ENCODE measurements at regions of chr14 and their contacts with region 1.

Region 1: DNA sequence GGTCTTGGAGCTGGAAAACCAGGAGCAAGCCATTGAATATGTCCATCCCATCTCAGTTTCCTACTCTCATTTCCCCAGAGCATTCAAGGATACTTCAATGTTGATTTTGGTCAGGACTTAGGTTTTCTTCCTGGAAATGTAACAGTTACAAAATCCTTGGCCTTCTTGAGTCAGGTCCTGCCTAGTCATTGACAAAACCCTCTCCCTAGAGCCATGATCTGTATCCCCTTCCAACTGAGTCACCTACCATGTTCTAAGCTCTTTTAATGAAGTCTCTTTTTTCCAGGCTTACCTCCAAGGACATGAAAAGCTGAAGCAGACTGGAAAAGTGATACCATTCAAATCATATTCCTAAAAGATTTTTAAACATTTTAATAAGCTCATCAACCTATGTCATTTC is 549.2 kb downstream of the GALC start:
- DNase-seq: no peak
- H3K4me3 Mint-ChIP-seq: no peak overlapping the region
- H3K27ac Mint-ChIP-seq: no peak overlapping the region
- H3K4me1 Mint-ChIP-seq: peaks cover 13% of the 10 kb centered on the region
- H3K27me3 Mint-ChIP-seq: no peaks in the 10 kb centered on the region
- CTCF ChIP-seq: no peak

Region 2: DNA sequence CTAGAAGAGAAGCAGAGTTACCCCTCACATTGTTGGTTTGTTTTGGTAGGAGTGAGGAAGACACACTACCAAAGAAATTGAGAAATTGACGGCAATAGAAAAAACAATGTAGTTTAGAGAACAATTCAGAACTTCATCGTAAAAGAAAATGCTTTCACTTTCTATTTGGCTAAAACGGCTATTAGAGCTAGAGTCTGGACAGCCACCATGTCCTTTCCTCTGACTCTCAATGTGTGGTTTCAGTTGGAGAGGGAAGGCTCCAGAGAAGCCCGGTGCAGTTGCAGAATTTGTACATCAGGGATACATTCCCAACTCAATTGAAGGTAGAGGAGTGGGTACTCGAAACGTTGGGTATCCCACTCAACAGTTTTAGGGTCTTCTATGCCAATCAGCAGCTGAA is 13.9 kb after region 1 on chr14:
- CTCF ChIA-PET with region 1: no interaction called
- intact Hi-C with region 1: loop called (anchors 2 kb)
- DNase-seq: no peak
- H3K4me3 Mint-ChIP-seq: peak overlapping the region; percentile 58
- H3K27ac Mint-ChIP-seq: no peak overlapping the region
- H3K4me1 Mint-ChIP-seq: no peaks in the 10 kb centered on the region
- H3K27me3 Mint-ChIP-seq: no peaks in the 10 kb centered on the region
- CTCF ChIP-seq: no peak

Region 3: DNA sequence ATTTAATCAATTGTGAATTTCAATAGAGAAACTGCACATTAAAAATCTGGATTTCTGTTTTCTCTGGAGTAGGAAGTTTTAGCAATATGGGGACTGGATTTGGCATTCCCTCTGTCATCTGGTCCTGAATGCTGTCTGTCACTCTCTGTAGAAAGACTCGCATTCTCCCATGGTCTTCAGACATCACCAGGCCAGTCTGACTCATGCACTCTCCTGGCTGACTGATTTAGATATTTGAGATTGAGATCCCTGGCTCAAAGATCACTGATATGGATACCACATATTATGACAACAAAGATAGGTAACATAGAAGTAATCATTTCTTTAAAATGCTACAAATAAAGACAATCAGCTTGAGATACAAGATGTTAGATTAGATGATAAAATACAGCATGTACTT is 24.7 kb after region 1 on chr14:
- CTCF ChIA-PET with region 1: no interaction called
- intact Hi-C with region 1: no loop called
- DNase-seq: no peak
- H3K4me3 Mint-ChIP-seq: no peak overlapping the region
- H3K27ac Mint-ChIP-seq: no peak overlapping the region
- H3K4me1 Mint-ChIP-seq: no peaks in the 10 kb centered on the region
- H3K27me3 Mint-ChIP-seq: no peaks in the 10 kb centered on the region
- CTCF ChIP-seq: no peak

Region 4: DNA sequence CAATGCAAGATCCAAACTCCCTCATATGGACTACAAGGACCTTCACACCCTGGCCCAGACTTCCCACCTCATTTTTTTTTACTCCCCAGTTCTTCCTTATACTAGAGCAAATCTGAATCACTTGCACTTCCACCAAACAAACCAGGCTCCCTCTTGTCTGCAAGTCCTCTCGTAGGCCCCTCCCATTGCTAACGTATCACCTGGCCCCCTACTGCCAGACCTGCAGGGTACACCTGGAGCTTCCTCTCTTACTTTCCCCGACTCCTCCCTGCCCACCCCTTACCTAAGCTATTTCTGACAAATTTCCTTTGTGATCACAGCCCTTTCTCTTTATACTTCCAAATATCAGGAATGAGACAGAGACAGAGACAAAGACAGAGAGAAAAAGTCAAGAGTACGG is 85.3 kb after region 1 on chr14:
- CTCF ChIA-PET with region 1: no interaction called
- intact Hi-C with region 1: no loop called
- DNase-seq: no peak
- H3K4me3 Mint-ChIP-seq: no peak overlapping the region
- H3K27ac Mint-ChIP-seq: no peak overlapping the region
- H3K4me1 Mint-ChIP-seq: no peaks in the 10 kb centered on the region
- H3K27me3 Mint-ChIP-seq: no peaks in the 10 kb centered on the region
- CTCF ChIP-seq: no peak